Sigmoid colon (tissue), 7 donors: ENCODE measurements at regions of chr5 and their contacts with region 1.

Region 1: DNA sequence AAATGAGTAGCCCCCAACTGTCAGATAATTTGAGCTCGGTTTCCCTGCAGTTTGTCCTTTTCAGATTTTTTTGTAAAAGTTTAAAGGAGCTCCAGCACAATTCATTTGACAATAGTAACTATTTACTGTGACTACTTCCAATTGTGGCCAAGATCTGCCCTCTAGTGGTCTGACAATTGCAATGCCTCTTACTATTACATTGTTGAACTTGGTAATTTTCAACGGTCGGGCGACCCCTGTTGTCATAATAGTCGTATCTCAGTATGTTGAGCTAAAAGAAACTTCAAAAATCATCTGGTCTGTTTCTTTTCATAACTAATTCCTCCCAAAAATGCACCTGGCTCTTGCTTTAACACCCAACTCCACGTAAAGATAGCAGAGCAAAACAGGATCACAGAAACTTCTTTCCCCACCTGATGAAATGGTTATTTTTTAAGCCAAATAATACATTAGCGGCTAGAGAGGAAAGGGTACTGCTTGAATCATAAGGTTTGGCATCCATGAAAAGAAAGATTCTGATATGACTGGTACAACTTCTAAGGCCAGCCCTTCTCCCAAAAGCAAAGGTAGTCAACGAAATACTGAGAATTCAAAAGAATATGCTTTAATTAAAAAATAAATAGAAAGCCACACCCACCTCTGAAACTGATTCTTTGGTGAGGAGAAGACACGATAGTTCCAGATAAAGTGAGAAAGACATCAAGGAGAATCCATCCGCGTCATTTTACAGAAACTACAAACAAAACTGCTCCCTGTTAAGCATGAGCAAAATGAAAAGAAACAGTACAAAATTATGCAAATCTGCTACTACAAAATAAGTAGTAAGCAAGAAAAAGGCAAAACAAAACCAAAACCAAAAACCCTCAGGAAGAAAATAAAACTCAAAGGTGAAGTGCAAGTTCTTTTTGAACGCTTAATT is 76.9 kb upstream of the HTR4 start:
- DNase-seq: peak; percentile 89
- H3K4me3 ChIP-seq: no peak overlapping the region
- H3K27ac ChIP-seq: peak overlapping the region in 3 of 4 donors; percentile 26 to 49 (median 34)
- H3K4me1 ChIP-seq: peaks cover 0 to 31% (median 23%) of the 10 kb centered on the region in 4 donors
- H3K27me3 ChIP-seq: no peaks in the 10 kb centered on the region
- CTCF ChIP-seq: peak; percentile 90 to 95 (median 93)
- EP300 ChIP-seq: no peak
- POLR2A ChIP-seq: no peak

Region 2: GRCh38 chr5:148290271-148291195 is 440.7 kb before region 1 on chr5:
- intact Hi-C with region 1: loop called (anchors 5 kb)
- DNase-seq: no peak
- H3K4me3 ChIP-seq: no peak overlapping the region
- H3K27ac ChIP-seq: no peak overlapping the region
- H3K4me1 ChIP-seq: no peaks in the 10 kb centered on the region
- H3K27me3 ChIP-seq: no peaks in the 10 kb centered on the region
- CTCF ChIP-seq: peak in 3 of 4 experiments; percentile 10 to 37 (median 27)
- EP300 ChIP-seq: no peak
- POLR2A ChIP-seq: no peak

Region 3: DNA sequence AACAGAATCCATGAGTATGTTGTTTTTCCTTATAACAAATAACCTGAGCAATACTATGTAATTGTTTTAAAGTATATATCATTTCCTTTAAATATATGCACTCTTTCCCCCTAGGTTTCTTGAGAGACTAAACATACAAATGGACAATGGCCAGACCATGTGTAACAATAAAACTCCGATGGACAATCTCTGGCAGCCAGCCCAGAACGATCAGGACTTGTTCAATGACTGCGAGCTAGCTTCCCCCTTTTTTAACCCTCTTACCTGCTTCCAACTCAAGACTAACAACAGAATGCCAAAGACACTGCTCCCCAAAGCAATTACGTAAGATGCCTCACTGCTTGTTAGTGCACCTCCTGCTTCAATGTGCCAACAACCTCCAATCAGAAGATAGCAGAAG is 171.7 kb before region 1 on chr5:
- intact Hi-C with region 1: loop called (anchors 10 kb)
- DNase-seq: no peak
- H3K4me3 ChIP-seq: no peak overlapping the region
- H3K27ac ChIP-seq: no peak overlapping the region
- H3K4me1 ChIP-seq: peaks cover 0 to 44% (median 27%) of the 10 kb centered on the region in 4 donors
- H3K27me3 ChIP-seq: no peaks in the 10 kb centered on the region
- CTCF ChIP-seq: no peak
- EP300 ChIP-seq: no peak
- POLR2A ChIP-seq: no peak

Region 4: GRCh38 chr5:149035372-149035790 is 304.2 kb after region 1 on chr5:
- intact Hi-C with region 1: loop called (anchors 1 kb)
- DNase-seq: peak; percentile 81
- H3K4me3 ChIP-seq: no peak overlapping the region
- H3K27ac ChIP-seq: no peak overlapping the region
- H3K4me1 ChIP-seq: no peaks in the 10 kb centered on the region
- H3K27me3 ChIP-seq: no peaks in the 10 kb centered on the region
- CTCF ChIP-seq: peak; percentile 50 to 82 (median 71)
- EP300 ChIP-seq: no peak
- POLR2A ChIP-seq: no peak